ENCODE measurements at regions of chr11 and their contacts with region 1.

Region 1: DNA sequence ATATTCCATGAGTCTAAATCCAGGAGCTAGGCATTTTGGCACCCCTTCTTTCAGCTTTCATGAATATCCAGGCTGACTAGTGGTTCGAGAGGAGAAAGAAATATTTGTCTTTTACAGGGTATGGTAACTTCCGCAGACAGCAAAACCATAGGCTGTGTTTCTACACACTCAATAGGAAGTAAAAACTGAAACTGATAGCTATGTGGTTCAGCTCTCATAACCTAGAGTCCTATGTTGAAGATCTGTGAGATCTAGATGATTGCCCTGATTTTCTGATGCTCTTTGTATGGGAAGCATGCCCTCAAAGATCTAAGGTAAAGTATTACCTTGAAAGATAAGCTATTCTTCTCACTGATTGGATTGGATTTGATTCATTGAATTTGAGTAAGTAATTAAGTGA is 118.3 kb downstream of the CD44 start:
- DNase-seq: peak in 4 of 10 donors; percentile 16 to 42 (median 38)
- ATAC-seq: peak; percentile 97 to 98
- H3K4me3 Mint-ChIP-seq: peak overlapping the region in 8 of 10 donors; percentile 48 to 75 (median 69)
- H3K27ac Mint-ChIP-seq: peak overlapping the region; percentile 86 to 95 (median 91)
- H3K4me1 Mint-ChIP-seq: peaks cover 14 to 46% (median 31%) of the 10 kb centered on the region in 4 donors
- H3K27me3 Mint-ChIP-seq: no peaks in the 10 kb centered on the region

Region 2: GRCh38 chr11:35246745-35247144 is 10.5 kb before region 1 on chr11:
- POLR2A ChIA-PET with region 1: interaction called, 26 read pairs
- DNase-seq: no peak
- ATAC-seq: no peak
- H3K4me3 Mint-ChIP-seq: peak overlapping the region in 8 of 10 donors; percentile 22 to 75 (median 61)
- H3K27ac Mint-ChIP-seq: peak overlapping the region; percentile 91 to 100 (median 98)
- H3K4me1 Mint-ChIP-seq: peaks cover 27 to 79% (median 74%) of the 10 kb centered on the region in 4 donors
- H3K27me3 Mint-ChIP-seq: no peaks in the 10 kb centered on the region